ENCODE measurements at regions of chr7 and their contacts with region 1.

Region 1: GRCh38 chr7:136336932-136337331 is 359.8 kb upstream of the MTPN start:
- DNase-seq: no peak
- ATAC-seq: no peak
- H3K4me3 ChIP-seq: no peak overlapping the region
- H3K27ac ChIP-seq: no peak overlapping the region
- H3K4me1 ChIP-seq: no peaks in the 10 kb centered on the region
- H3K27me3 ChIP-seq: no peaks in the 10 kb centered on the region
- CTCF ChIP-seq: no peak

Region 2: DNA sequence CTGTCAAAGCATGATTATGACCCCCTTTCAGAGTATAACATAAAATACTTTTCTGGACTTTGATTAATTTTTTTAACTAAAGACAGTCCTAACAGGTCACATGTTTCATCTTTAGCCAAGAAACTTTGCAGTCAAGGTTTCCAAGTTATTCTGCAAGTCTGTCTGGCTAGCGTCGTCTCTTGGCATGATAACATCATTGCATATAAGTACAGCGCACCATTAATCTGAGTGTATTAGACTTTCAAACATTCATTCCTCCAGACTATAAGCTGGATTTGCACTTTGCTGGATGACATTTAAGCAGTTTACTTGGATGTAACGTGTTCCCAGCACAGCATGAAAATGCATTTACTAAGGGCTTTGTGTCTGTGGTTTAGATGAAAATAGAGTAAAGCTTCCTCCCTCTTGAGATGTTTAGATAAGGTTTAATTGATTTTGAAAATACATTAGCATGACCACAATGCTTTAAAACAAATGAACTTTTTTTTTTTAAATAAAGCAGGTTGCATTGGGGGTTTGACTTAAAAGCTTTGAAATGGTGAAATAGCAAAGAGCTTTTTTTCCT is 10.8 kb before region 1 on chr7:
- intact Hi-C with region 1: loop called in 1 of 10 experiments (anchors 2 kb)
- DNase-seq: no peak
- ATAC-seq: no peak
- H3K4me3 ChIP-seq: no peak overlapping the region
- H3K27ac ChIP-seq: no peak overlapping the region
- H3K4me1 ChIP-seq: no peaks in the 10 kb centered on the region
- H3K27me3 ChIP-seq: peaks cover 0 to 3% (median 0%) of the 10 kb centered on the region in 7 donors
- CTCF ChIP-seq: no peak